ENCODE measurements at regions of chr18 and their contacts with region 1.

Region 1: GRCh38 chr18:49858309-49859020 is 45.1 kb upstream of the ACAA2 start:
- DNase-seq: peak; percentile 44
- ATAC-seq: peak; percentile 82
- H3K4me3 ChIP-seq: no peak overlapping the region
- H3K27ac ChIP-seq: no peak overlapping the region
- H3K4me1 ChIP-seq: peaks cover 16% of the 10 kb centered on the region
- H3K27me3 ChIP-seq: no peaks in the 10 kb centered on the region
- CTCF ChIP-seq: peak; percentile 88
- EP300 ChIP-seq: no peak
- POLR2A ChIP-seq: no peak
- RAD21 ChIP-seq: peak; percentile 93

Region 2: DNA sequence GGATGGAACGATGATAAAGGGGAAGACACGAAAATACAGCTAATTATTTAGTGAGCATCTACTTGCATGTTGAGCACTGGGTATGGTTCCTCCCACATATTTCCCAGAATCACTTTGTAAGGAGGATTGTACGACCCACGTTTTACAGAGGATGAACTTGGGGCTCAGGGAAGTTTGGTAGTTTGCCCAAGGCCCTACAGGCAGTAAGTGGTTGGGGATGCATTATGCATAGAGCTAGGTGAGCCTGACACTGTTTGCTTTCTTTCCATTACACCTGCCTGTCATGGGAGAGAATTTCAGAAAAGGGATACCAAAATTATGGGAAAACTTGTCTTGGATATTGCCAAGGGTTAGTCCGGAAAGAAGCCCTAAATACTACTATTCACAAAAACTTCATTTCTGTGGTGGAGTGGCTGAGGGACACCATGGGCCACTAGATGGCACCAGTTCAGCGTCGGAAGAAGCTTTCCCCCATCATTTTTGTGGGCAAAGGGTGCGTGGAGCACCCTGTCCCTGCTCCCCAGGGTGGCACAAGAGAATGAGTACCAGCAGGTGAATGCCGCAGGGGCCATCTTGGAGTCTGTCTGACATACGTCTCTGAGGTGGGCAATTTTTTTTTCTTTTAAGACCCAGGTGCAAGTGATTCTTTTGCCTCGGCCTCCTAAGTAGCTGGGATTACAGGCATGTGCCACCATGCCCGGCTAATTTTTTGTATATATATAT is 347.9 kb before region 1 on chr18:
- CTCF ChIA-PET with region 1: interaction called, 33 read pairs
- POLR2A ChIA-PET with region 1: interaction called, 4 read pairs
- in situ Hi-C with region 1: loop called (anchors 5 kb)
- intact Hi-C with region 1: loop called (anchors 1 kb)
- DNase-seq: no peak
- ATAC-seq: peak; percentile 85
- H3K4me3 ChIP-seq: no peak overlapping the region
- H3K27ac ChIP-seq: no peak overlapping the region
- H3K4me1 ChIP-seq: peaks cover 13% of the 10 kb centered on the region
- H3K27me3 ChIP-seq: 0 out of 5 replicates have a peak, but pooled peaks cover 0 to 2% of the 10 kb centered on the region in 2 experiments
- CTCF ChIP-seq: peak; percentile 89
- EP300 ChIP-seq: no peak
- POLR2A ChIP-seq: no peak
- RAD21 ChIP-seq: peak; percentile 84

Region 3: DNA sequence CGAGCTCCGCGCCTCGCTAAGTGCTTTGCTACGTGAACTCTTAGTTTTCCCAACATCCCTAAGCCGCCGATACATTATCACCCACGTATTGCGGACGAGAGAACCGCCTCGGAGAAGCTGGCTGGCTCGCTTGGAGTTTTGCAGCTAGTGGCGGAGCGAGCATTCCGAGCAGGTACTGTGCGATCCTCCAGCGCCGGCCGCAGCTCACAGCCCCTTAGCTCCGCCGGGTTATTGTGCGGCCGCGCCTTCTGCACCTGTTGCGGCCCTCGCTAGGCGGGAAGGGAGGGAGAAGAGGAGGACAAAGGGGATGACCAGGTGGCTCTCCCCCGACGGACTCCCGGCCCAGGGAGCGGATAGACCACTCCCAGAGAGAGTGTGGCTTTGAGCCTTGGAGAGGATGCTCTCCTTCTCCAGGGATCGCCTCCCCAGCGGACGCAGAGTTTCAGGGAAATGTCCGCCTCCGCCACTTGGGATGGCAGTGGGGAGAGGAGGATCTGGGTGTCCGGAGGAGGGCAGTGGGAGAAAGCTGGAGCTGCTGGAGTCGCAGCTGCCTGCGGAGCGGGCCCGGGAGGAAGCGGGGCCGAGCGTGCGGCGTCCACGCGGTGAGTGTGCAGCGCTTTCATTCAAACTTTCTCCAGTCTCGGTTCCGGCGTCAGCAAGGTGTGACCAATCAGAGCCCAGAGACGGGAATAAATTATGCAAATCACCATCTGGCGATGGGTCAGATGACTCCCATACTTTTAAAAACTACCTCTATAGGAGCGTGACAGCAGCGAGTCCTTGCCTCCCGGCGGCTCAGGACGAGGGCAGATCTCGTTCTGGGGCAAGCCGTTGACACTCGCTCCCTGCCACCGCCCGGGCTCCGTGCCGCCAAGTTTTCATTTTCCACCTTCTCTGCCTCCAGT is 296.9 kb before region 1 on chr18 and contains the start of gene LIPG:
- CTCF ChIA-PET with region 1: interaction called, 15 read pairs
- POLR2A ChIA-PET with region 1: no interaction called
- in situ Hi-C with region 1: loop called (anchors 5 kb)
- intact Hi-C with region 1: loop called (anchors 1 kb)
- DNase-seq: peak; percentile 34
- ATAC-seq: peak; percentile 88
- H3K4me3 ChIP-seq: peak within 1 kb of the TSS; percentile 28 to 67 (median 46)
- H3K27ac ChIP-seq: no peak within 1 kb of the TSS
- H3K4me1 ChIP-seq: peaks cover 45% of the 10 kb centered on the region
- H3K27me3 ChIP-seq: peaks cover 16 to 37% of the 10 kb centered on the region in 2 experiments
- CTCF ChIP-seq: no peak
- EP300 ChIP-seq: no peak
- POLR2A ChIP-seq: peak; percentile 53 to 74; a peak in 3 of 4 replicates
- RAD21 ChIP-seq: no peak
- total RNA-seq, gene LIPG: 4.9 and 10.8 TPM in 2 replicates

Region 4: DNA sequence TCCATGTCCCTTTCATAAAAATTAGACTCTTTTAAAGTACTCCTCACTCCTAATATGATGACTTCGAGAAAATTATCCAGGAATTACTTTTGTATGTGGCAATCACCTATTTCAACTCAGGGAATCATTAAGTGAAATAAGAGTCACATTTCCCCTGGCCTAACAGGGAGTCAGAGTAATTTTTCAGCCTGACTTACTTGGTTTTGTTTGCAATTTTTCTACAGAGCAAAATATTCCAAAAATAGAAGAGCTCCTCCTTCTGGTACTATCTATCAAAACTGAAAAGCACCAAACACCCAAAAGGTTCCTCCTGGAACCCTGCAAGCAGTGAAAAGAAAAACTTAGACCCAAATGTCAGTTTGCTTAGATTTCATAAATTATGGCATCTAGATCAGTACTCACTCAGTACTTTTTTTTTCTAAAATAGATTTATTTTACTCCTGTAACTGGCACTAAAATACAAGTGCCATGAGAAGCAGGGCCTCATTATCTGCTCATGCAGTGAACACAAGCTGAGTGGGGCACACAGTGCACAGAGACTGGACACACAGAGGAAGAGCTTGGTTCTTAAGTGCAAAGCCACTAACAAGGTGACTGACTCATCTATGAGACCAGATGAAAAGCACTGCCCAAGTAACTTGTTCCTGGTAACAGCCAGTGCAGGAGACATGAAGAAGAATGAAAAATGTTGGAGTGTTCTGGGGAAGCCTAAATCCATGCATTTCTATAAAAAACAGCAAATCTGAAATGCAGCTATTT is 73.9 kb before region 1 on chr18:
- CTCF ChIA-PET with region 1: no interaction called
- POLR2A ChIA-PET with region 1: interaction called, 5 read pairs
- in situ Hi-C with region 1: no loop called
- intact Hi-C with region 1: loop called (anchors 5 kb)
- DNase-seq: no peak
- ATAC-seq: no peak
- H3K4me3 ChIP-seq: no peak overlapping the region
- H3K27ac ChIP-seq: no peak overlapping the region
- H3K4me1 ChIP-seq: peaks cover 10% of the 10 kb centered on the region; the same call in 1 of the 2 replicates
- H3K27me3 ChIP-seq: no peaks in the 10 kb centered on the region
- CTCF ChIP-seq: no peak; the same call in 1 of the 2 replicates
- EP300 ChIP-seq: no peak
- POLR2A ChIP-seq: no peak
- RAD21 ChIP-seq: no peak

Region 5: GRCh38 chr18:49813319-49814146 is 44.9 kb before region 1 on chr18 and contains the start of gene ACAA2:
- CTCF ChIA-PET with region 1: no interaction called
- POLR2A ChIA-PET with region 1: interaction called, 4 read pairs
- in situ Hi-C with region 1: no loop called
- intact Hi-C with region 1: loop called (anchors 5 kb)
- DNase-seq: peak; percentile 63
- ATAC-seq: peak; percentile 92
- H3K4me3 ChIP-seq: peak within 1 kb of the TSS; percentile 71 to 95 (median 88)
- H3K27ac ChIP-seq: peak within 1 kb of the TSS; percentile 96
- H3K4me1 ChIP-seq: peaks cover 39% of the 10 kb centered on the region
- H3K27me3 ChIP-seq: no peaks in the 10 kb centered on the region
- CTCF ChIP-seq: no peak; the same call in 1 of the 2 replicates
- EP300 ChIP-seq: no peak
- POLR2A ChIP-seq: peak; percentile 75 to 86
- RAD21 ChIP-seq: no peak
- total RNA-seq, gene ACAA2: 182 and 269 TPM in 2 replicates

Region 6: GRCh38 chr18:50111265-50111792 is 252.9 kb after region 1 on chr18:
- CTCF ChIA-PET with region 1: no interaction called
- POLR2A ChIA-PET with region 1: no interaction called
- in situ Hi-C with region 1: no loop called
- intact Hi-C with region 1: no loop called
- DNase-seq: no peak
- ATAC-seq: no peak
- H3K4me3 ChIP-seq: no peak overlapping the region
- H3K27ac ChIP-seq: no peak overlapping the region
- H3K4me1 ChIP-seq: peaks cover 24% of the 10 kb centered on the region
- H3K27me3 ChIP-seq: no peaks in the 10 kb centered on the region
- CTCF ChIP-seq: no peak
- EP300 ChIP-seq: no peak
- POLR2A ChIP-seq: no peak
- RAD21 ChIP-seq: no peak

Measured in HepG2 (cell line).